Endothelial cell of umbilical vein (primary cell): ENCODE measurements at regions of chr3 and their contacts with region 1.

Region 1: GRCh38 chr3:38738630-38739395 is 77.2 kb downstream of the SCN10A start:
- DNase-seq: peak; percentile 73
- H3K4me3 ChIP-seq: no peak overlapping the region
- H3K27ac ChIP-seq: peak overlapping the region; percentile 10
- H3K4me1 ChIP-seq: peaks cover 3% of the 10 kb centered on the region
- H3K27me3 ChIP-seq: no peaks in the 10 kb centered on the region
- CTCF ChIP-seq: peak; percentile 84 to 89
- POLR2A ChIP-seq: no peak

Region 2: GRCh38 chr3:37645517-37646380 is 1093.1 kb before region 1 on chr3:
- CTCF ChIA-PET with region 1: no interaction called
- POLR2A ChIA-PET with region 1: no interaction called
- dilution Hi-C with region 1: no loop called
- intact Hi-C with region 1: no loop called
- DNase-seq: no peak
- H3K4me3 ChIP-seq: no peak overlapping the region
- H3K27ac ChIP-seq: no peak overlapping the region
- H3K4me1 ChIP-seq: no peaks in the 10 kb centered on the region
- H3K27me3 ChIP-seq: no peaks in the 10 kb centered on the region
- CTCF ChIP-seq: no peak
- POLR2A ChIP-seq: no peak

Region 3: DNA sequence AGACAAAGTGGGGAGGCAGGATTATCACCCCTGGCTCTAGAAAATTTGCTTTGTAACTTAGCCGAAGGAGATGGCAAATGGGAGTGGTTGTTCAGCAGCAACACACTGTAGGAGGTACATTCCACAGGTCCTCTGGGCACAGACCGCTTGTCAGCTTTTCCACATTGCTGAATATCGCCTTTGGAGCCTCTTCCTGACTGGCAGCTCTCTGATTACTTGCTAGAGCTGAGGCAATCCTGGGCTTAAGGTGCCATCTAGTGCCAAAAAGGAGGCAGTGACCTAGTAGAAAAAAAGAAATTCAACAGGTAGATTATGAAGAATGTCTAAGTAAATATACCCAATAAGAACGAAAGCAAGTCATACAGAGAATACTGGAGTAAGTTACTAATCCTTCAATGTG is 76.3 kb before region 1 on chr3:
- CTCF ChIA-PET with region 1: interaction called, 3 read pairs
- POLR2A ChIA-PET with region 1: no interaction called
- dilution Hi-C with region 1: no loop called
- intact Hi-C with region 1: loop called (anchors 2 kb)
- DNase-seq: peak; percentile 58
- H3K4me3 ChIP-seq: no peak overlapping the region
- H3K27ac ChIP-seq: no peak overlapping the region
- H3K4me1 ChIP-seq: no peaks in the 10 kb centered on the region
- H3K27me3 ChIP-seq: peaks cover 16 to 19% of the 10 kb centered on the region in 2 experiments
- CTCF ChIP-seq: peak; percentile 41 to 52
- POLR2A ChIP-seq: no peak

Region 4: GRCh38 chr3:38805765-38806386 is 67.1 kb after region 1 on chr3:
- CTCF ChIA-PET with region 1: interaction called, 10 read pairs
- POLR2A ChIA-PET with region 1: no interaction called
- dilution Hi-C with region 1: no loop called
- intact Hi-C with region 1: no loop called
- DNase-seq: peak; percentile 74
- H3K4me3 ChIP-seq: no peak overlapping the region
- H3K27ac ChIP-seq: no peak overlapping the region
- H3K4me1 ChIP-seq: no peaks in the 10 kb centered on the region
- H3K27me3 ChIP-seq: peaks cover 0 to 7% of the 10 kb centered on the region in 2 experiments
- CTCF ChIP-seq: no peak
- POLR2A ChIP-seq: no peak

Region 5: GRCh38 chr3:39086144-39086543 is 347.3 kb after region 1 on chr3:
- CTCF ChIA-PET with region 1: no interaction called
- POLR2A ChIA-PET with region 1: no interaction called
- dilution Hi-C with region 1: no loop called
- intact Hi-C with region 1: no loop called
- DNase-seq: no peak
- H3K4me3 ChIP-seq: no peak overlapping the region
- H3K27ac ChIP-seq: no peak overlapping the region
- H3K4me1 ChIP-seq: no peaks in the 10 kb centered on the region
- H3K27me3 ChIP-seq: no peaks in the 10 kb centered on the region
- CTCF ChIP-seq: no peak
- POLR2A ChIP-seq: no peak